Aorta (tissue), 5 donors: ENCODE measurements at regions of chr6 and their contacts with region 1.

Region 1: DNA sequence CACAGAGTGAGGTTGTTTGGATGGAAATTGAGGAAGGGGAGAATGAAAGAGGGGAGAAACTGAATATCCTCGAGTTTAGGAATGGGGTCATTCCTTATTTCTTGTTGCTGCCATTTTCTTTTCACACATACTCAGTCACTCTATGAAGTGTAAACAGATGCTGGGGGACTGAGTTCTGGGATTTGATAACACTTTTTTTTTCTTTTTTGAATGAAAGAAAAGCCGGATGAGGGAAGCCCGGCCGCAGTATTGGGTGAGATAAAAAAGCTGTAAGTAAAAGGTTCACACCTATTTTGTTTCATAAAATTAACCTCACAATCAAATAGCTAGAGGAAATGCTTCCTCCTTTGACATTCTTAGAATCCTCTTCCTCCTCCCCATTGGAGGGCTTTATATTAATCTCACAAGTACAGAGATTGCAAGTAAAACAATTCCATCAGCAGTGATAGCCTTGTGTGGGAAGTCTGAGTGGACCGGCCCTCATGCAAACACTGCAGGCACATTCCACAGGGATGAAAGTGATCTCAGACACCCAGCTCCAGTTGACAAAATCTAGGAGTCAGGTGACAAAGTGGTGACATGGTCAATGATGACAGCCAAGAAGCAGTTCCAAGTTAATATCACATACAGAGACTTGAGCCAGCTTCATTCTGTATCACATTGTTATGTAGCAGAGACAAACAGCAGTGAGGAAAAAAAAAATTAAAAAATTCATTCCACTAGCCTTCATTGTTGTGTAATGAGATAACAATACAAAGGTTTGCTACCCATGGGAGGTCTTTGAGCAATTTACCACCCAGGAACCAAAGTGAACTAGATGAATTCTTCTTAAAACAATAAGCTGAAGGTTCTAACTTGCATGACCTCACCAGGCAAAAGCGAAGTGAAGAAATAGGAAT is 391.1 kb upstream of the HSF2 start:
- DNase-seq: no peak
- ATAC-seq: no peak
- H3K4me3 ChIP-seq: no peak overlapping the region
- H3K27ac ChIP-seq: no peak overlapping the region
- H3K4me1 ChIP-seq: peaks cover 0 to 5% of the 10 kb centered on the region in 2 donors
- H3K27me3 ChIP-seq: no peaks in the 10 kb centered on the region

Region 2: GRCh38 chr6:121959501-121959900 is 48.8 kb before region 1 on chr6:
- intact Hi-C with region 1: no loop called
- DNase-seq: no peak
- ATAC-seq: no peak
- H3K4me3 ChIP-seq: no peak overlapping the region
- H3K27ac ChIP-seq: no peak overlapping the region
- H3K4me1 ChIP-seq: no peaks in the 10 kb centered on the region
- H3K27me3 ChIP-seq: no peaks in the 10 kb centered on the region

Region 3: DNA sequence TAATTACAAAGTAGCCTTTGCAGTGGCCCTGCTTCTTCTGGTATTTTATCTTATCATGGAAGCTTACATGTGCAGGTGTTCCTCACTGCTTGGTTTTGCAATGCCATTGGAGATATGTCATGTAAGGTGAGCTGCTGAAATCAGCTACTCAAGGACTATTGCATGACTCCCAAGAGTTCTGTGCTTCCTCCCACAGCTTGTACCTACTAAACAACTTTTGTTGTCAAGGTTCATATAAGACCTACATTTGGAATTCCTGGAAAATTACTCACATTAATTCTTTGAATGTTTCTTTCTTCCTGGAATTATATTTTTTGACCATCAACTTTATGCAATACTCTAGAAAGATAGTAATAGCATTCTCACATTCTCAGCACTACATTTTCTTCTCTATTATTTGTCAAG is 36.4 kb before region 1 on chr6:
- intact Hi-C with region 1: loop called in 1 of 2 experiments (anchors 5 kb)
- DNase-seq: no peak
- ATAC-seq: no peak
- H3K4me3 ChIP-seq: no peak overlapping the region
- H3K27ac ChIP-seq: no peak overlapping the region
- H3K4me1 ChIP-seq: no peaks in the 10 kb centered on the region
- H3K27me3 ChIP-seq: no peaks in the 10 kb centered on the region